ENCODE measurements at regions of chr14 and their contacts with region 1.

Region 1: GRCh38 chr14:49862089-49862673 is 9.6 kb upstream of the NEMF start:
- DNase-seq: peak; percentile 71 to 97 (median 86)
- ATAC-seq: peak; percentile 24 to 31
- H3K4me3 Mint-ChIP-seq: no peak overlapping the region
- H3K27ac Mint-ChIP-seq: no peak overlapping the region
- H3K4me1 Mint-ChIP-seq: peaks cover 0 to 28% (median 15%) of the 10 kb centered on the region in 4 donors
- H3K27me3 Mint-ChIP-seq: peaks cover 0 to 8% (median 0%) of the 10 kb centered on the region in 5 donors

Region 2: GRCh38 chr14:49620182-49621113 is 241.7 kb before region 1 on chr14 and contains the starts of genes MGAT2 and RPL36AL:
- POLR2A ChIA-PET with region 1: interaction called, 20 read pairs
- DNase-seq: peak; percentile 82 to 98 (median 92)
- ATAC-seq: peak; percentile 84 to 86
- H3K4me3 Mint-ChIP-seq: peak within 1 kb of the TSS; percentile 93 to 99 (median 98)
- H3K27ac Mint-ChIP-seq: peak within 1 kb of the TSS; percentile 97 to 99 (median 99)
- H3K4me1 Mint-ChIP-seq: peaks cover 18 to 65% (median 51%) of the 10 kb centered on the region in 4 donors
- H3K27me3 Mint-ChIP-seq: no peaks in the 10 kb centered on the region
- polyA plus RNA-seq, gene MGAT2: 15.8 to 25.9 (median 19.8) TPM
- polyA plus RNA-seq, gene RPL36AL: 489 to 628 (median 623) TPM

Region 3: GRCh38 chr14:49892636-49893308 is 30.6 kb after region 1 on chr14 and contains the start of gene ARF6:
- POLR2A ChIA-PET with region 1: interaction called, 72 read pairs
- DNase-seq: peak; percentile 88 to 98 (median 90)
- ATAC-seq: peak; percentile 78 to 82
- H3K4me3 Mint-ChIP-seq: peak within 1 kb of the TSS; percentile 92 to 100 (median 98)
- H3K27ac Mint-ChIP-seq: peak within 1 kb of the TSS; percentile 98 to 100 (median 99)
- H3K4me1 Mint-ChIP-seq: peaks cover 22 to 44% (median 36%) of the 10 kb centered on the region in 4 donors
- H3K27me3 Mint-ChIP-seq: peaks cover 0 to 1% (median 0%) of the 10 kb centered on the region in 5 donors
- polyA plus RNA-seq, gene ARF6: 74.6 to 100 (median 97.6) TPM

Region 4: GRCh38 chr14:50003213-50004031 is 141.2 kb after region 1 on chr14:
- POLR2A ChIA-PET with region 1: interaction called, 81 read pairs
- DNase-seq: peak; percentile 66 to 91 (median 76)
- ATAC-seq: peak; percentile 46 to 53
- H3K4me3 Mint-ChIP-seq: peak overlapping the region; percentile 77 to 94 (median 90)
- H3K27ac Mint-ChIP-seq: peak overlapping the region; percentile 96 to 99 (median 98)
- H3K4me1 Mint-ChIP-seq: peaks cover 34 to 62% (median 51%) of the 10 kb centered on the region in 4 donors
- H3K27me3 Mint-ChIP-seq: no peaks in the 10 kb centered on the region

Region 5: DNA sequence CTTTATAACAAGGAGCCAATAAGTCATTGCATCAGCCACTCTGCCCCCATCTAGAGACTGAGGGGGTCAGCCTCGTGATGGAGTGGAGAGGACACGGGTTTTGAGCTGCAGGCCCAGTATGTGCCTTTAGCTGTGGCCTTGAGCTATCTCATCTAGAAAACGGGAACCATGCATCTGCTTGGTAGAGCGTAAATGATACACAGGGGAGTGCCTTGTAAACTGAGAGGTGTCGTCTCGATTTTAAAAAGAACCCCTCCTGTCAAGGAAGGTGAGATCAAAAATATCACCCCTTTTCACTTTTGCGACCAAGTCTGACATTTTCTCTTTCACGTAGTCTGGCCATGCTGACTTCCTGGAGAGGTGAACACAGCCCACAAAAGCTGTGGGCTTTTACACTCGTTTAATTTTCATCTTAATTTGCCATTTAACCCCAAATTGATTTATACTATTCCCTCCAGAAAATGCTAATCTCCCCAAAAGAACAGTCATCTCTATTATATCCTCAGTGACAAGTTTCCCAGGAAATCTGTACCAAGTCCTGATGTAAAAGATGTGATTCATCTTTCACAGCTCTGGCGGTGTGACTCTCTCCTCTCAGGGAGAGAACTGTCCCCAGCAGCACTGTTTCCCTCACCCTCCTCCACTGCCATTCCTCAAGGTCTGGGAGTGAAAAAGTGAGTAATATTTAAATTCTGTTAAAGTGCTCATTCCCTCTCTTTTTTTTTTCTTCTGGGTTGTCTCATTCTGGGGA is 223.6 kb after region 1 on chr14:
- POLR2A ChIA-PET with region 1: interaction called, 35 read pairs
- DNase-seq: peak in 3 of 10 donors; percentile 26 to 49 (median 37)
- ATAC-seq: no peak
- H3K4me3 Mint-ChIP-seq: peak overlapping the region; percentile 15 to 82 (median 68)
- H3K27ac Mint-ChIP-seq: peak overlapping the region; percentile 79 to 97 (median 93)
- H3K4me1 Mint-ChIP-seq: peaks cover 39 to 94% (median 88%) of the 10 kb centered on the region in 4 donors
- H3K27me3 Mint-ChIP-seq: no peaks in the 10 kb centered on the region

Region 6: DNA sequence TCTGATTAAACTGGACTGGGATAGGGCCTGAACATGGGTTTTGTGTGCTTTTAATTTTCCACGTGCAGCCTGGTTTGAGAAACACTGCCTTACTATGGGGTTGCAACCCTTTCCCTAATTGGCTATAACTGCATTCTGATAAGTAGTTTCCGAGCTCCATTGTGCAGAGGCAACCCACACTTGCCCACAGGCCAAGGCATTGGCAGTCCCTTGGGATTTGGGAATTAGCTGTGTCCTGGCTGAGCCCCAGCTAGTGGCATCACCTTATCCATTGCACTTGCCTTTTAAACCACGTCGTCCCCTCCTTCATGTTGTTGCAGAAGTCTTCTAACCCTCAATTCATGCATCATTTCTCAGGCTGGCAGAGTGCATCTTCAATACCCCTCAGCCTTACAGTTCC is 244.0 kb after region 1 on chr14:
- POLR2A ChIA-PET with region 1: interaction called, 71 read pairs
- DNase-seq: no peak
- ATAC-seq: no peak
- H3K4me3 Mint-ChIP-seq: no peak overlapping the region
- H3K27ac Mint-ChIP-seq: peak overlapping the region in 9 of 10 donors; percentile 16 to 90 (median 59)
- H3K4me1 Mint-ChIP-seq: peaks cover 5 to 38% (median 23%) of the 10 kb centered on the region in 4 donors
- H3K27me3 Mint-ChIP-seq: no peaks in the 10 kb centered on the region

Measured in naive thymus-derived CD8-positive, alpha-beta T cell (primary cell).